ENCODE measurements at regions of chr1 and their contacts with region 1.

Region 1: GRCh38 chr1:226940029-226940805 is at the start of gene COQ8A:
- DNase-seq: peak; percentile 100
- ATAC-seq: peak; percentile 80 to 90 (median 86)
- H3K4me3 ChIP-seq: peak within 1 kb of the TSS; percentile 79
- H3K27ac ChIP-seq: peak within 1 kb of the TSS; percentile 97
- H3K4me1 ChIP-seq: peaks cover 33% of the 10 kb centered on the region
- H3K27me3 ChIP-seq: no peaks in the 10 kb centered on the region
- CTCF ChIP-seq: no peak
- total RNA-seq, gene COQ8A: 574 to 1,432 (median 837) TPM

Region 2: GRCh38 chr1:226920446-226920894 is 19.7 kb before region 1 on chr1:
- intact Hi-C with region 1: loop called (anchors 2 kb)
- DNase-seq: peak; percentile 65 to 90
- ATAC-seq: peak; percentile 88 to 95 (median 92)
- H3K4me3 ChIP-seq: no peak overlapping the region
- H3K27ac ChIP-seq: peak overlapping the region; percentile 87
- H3K4me1 ChIP-seq: peaks cover 24% of the 10 kb centered on the region
- H3K27me3 ChIP-seq: no peaks in the 10 kb centered on the region
- CTCF ChIP-seq: no peak

Region 3: GRCh38 chr1:226984521-226985238 is 44.5 kb after region 1 on chr1:
- intact Hi-C with region 1: loop called in 1 of 2 experiments (anchors 5 kb)
- DNase-seq: peak in 1 of 2 donors; percentile 87
- ATAC-seq: peak; percentile 24 to 51 (median 36)
- H3K4me3 ChIP-seq: no peak overlapping the region
- H3K27ac ChIP-seq: peak overlapping the region; percentile 85
- H3K4me1 ChIP-seq: peaks cover 91% of the 10 kb centered on the region
- H3K27me3 ChIP-seq: no peaks in the 10 kb centered on the region
- CTCF ChIP-seq: no peak